CD4-positive, alpha-beta T cell (primary cell): ENCODE measurements at regions of chr6 and their contacts with region 1.

Region 1: GRCh38 chr6:144095331-144096002 is at the start of gene SF3B5:
- DNase-seq: peak; percentile 93 to 100 (median 97)
- ATAC-seq: peak; percentile 96
- H3K4me3 ChIP-seq: peak within 1 kb of the TSS; percentile 83
- H3K4me3 Mint-ChIP-seq: peak within 1 kb of the TSS; percentile 98
- H3K27ac ChIP-seq: peak within 1 kb of the TSS; percentile 84 to 94
- H3K27ac Mint-ChIP-seq: peak within 1 kb of the TSS; percentile 96
- H3K4me1 ChIP-seq: peaks cover 24% of the 10 kb centered on the region
- H3K4me1 Mint-ChIP-seq: peaks cover 30% of the 10 kb centered on the region
- H3K27me3 ChIP-seq: no peaks in the 10 kb centered on the region
- H3K27me3 Mint-ChIP-seq: no peaks in the 10 kb centered on the region
- CTCF ChIP-seq: no peak
- total RNA-seq, gene SF3B5: 113 to 124 TPM

Region 2: DNA sequence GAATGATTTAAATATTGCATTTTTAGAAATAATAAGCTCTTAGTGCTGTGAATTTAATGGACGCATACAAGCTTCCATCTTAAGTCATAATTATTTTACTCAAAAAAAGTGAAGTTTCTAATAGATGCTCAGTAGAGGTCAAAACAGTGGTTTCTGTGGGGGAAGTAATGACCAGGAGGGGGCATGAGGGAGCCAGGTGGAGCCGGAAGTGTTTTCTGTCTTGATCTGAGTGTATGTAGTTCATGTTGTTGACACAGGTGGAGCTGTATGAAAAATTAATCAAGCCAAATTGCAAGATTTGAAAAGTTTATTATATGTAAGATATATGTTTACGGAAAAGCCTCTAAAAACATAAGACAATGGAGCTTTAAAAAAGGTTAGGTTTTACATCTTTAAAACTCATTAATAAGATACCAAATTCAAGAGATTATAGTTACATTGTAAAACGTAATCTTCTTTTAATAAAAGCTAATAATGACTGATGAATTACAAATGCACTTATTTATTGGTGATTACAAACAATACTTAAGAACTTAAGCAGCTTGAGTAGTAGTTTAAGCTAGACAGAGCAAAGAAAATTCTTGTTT is 155.4 kb before region 1 on chr6:
- CTCF ChIA-PET with region 1: interaction called, 4 read pairs
- POLR2A ChIA-PET with region 1: interaction called, 3 read pairs
- intact Hi-C with region 1: loop called in 1 of 2 experiments (anchors 2 kb)
- DNase-seq: peak; percentile 34 to 79 (median 44)
- ATAC-seq: peak; percentile 97
- H3K4me3 ChIP-seq: no peak overlapping the region
- H3K4me3 Mint-ChIP-seq: no peak overlapping the region
- H3K27ac ChIP-seq: no peak overlapping the region
- H3K27ac Mint-ChIP-seq: no peak overlapping the region
- H3K4me1 ChIP-seq: peaks cover 8% of the 10 kb centered on the region
- H3K4me1 Mint-ChIP-seq: peaks cover 6% of the 10 kb centered on the region
- H3K27me3 ChIP-seq: no peaks in the 10 kb centered on the region
- H3K27me3 Mint-ChIP-seq: no peaks in the 10 kb centered on the region
- CTCF ChIP-seq: peak; percentile 86

Region 3: GRCh38 chr6:144063744-144064401 is 31.6 kb before region 1 on chr6:
- CTCF ChIA-PET with region 1: no interaction called
- POLR2A ChIA-PET with region 1: interaction called, 66 read pairs
- intact Hi-C with region 1: loop called (anchors 1 to 2 kb)
- DNase-seq: peak; percentile 84 to 96 (median 91)
- ATAC-seq: peak; percentile 90
- H3K4me3 ChIP-seq: peak overlapping the region; percentile 73
- H3K4me3 Mint-ChIP-seq: peak overlapping the region; percentile 95
- H3K27ac ChIP-seq: peak overlapping the region; percentile 75 to 90
- H3K27ac Mint-ChIP-seq: peak overlapping the region; percentile 95
- H3K4me1 ChIP-seq: peaks cover 20% of the 10 kb centered on the region
- H3K4me1 Mint-ChIP-seq: peaks cover 31% of the 10 kb centered on the region
- H3K27me3 ChIP-seq: no peaks in the 10 kb centered on the region
- H3K27me3 Mint-ChIP-seq: no peaks in the 10 kb centered on the region
- CTCF ChIP-seq: peak; percentile 41

Region 4: GRCh38 chr6:144349690-144350527 is 254.4 kb after region 1 on chr6:
- CTCF ChIA-PET with region 1: no interaction called
- POLR2A ChIA-PET with region 1: interaction called, 6 read pairs
- intact Hi-C with region 1: loop called in 1 of 2 experiments (anchors 5 kb)
- DNase-seq: peak in 4 of 14 experiments; percentile 19 to 71 (median 62)
- ATAC-seq: peak; percentile 65
- H3K4me3 ChIP-seq: peak overlapping the region; percentile 42
- H3K4me3 Mint-ChIP-seq: peak overlapping the region; percentile 85
- H3K27ac ChIP-seq: peak overlapping the region; percentile 81 to 82
- H3K27ac Mint-ChIP-seq: peak overlapping the region; percentile 89
- H3K4me1 ChIP-seq: peaks cover 83% of the 10 kb centered on the region
- H3K4me1 Mint-ChIP-seq: peaks cover 86% of the 10 kb centered on the region
- H3K27me3 ChIP-seq: no peaks in the 10 kb centered on the region
- H3K27me3 Mint-ChIP-seq: no peaks in the 10 kb centered on the region
- CTCF ChIP-seq: no peak